IMR-90 (cell line): ENCODE measurements at regions of chrX and their contacts with region 1.

Region 1: GRCh38 chrX:139063364-139063763 is 351.8 kb upstream of the FGF13 start:
- DNase-seq: no peak
- ATAC-seq: no peak
- H3K4me3 ChIP-seq: no peak overlapping the region
- H3K27ac ChIP-seq: no peak overlapping the region
- H3K4me1 ChIP-seq: no peaks in the 10 kb centered on the region
- H3K27me3 ChIP-seq: no peaks in the 10 kb centered on the region
- CTCF ChIP-seq: no peak
- POLR2A ChIP-seq: no peak
- RAD21 ChIP-seq: no peak

Region 2: DNA sequence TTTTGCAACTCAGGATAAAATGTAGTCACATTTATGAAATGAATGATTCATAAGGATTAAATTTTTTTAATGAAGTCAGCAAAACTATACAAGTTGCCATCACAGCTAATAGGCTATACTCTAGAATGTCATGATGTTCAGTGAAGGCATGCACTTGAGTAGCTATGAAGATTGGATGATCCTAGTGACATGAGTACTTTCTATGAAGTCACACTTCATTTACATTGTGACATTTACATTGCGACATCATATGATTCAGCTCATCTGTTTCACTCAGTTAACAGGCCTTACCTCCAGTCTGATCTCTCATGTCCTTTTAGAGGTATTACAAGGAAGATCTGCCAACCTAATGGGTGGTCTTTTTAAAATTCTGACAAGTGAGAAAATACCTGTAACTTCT is 269.1 kb before region 1 on chrX:
- CTCF ChIA-PET with region 1: no interaction called
- POLR2A ChIA-PET with region 1: no interaction called
- dilution Hi-C with region 1: no loop called
- in situ Hi-C with region 1: no loop called
- intact Hi-C with region 1: no loop called
- DNase-seq: no peak
- ATAC-seq: no peak
- H3K4me3 ChIP-seq: no peak overlapping the region
- H3K27ac ChIP-seq: no peak overlapping the region
- H3K4me1 ChIP-seq: no peaks in the 10 kb centered on the region
- H3K27me3 ChIP-seq: no peaks in the 10 kb centered on the region
- CTCF ChIP-seq: no peak
- POLR2A ChIP-seq: no peak
- RAD21 ChIP-seq: no peak

Region 3: DNA sequence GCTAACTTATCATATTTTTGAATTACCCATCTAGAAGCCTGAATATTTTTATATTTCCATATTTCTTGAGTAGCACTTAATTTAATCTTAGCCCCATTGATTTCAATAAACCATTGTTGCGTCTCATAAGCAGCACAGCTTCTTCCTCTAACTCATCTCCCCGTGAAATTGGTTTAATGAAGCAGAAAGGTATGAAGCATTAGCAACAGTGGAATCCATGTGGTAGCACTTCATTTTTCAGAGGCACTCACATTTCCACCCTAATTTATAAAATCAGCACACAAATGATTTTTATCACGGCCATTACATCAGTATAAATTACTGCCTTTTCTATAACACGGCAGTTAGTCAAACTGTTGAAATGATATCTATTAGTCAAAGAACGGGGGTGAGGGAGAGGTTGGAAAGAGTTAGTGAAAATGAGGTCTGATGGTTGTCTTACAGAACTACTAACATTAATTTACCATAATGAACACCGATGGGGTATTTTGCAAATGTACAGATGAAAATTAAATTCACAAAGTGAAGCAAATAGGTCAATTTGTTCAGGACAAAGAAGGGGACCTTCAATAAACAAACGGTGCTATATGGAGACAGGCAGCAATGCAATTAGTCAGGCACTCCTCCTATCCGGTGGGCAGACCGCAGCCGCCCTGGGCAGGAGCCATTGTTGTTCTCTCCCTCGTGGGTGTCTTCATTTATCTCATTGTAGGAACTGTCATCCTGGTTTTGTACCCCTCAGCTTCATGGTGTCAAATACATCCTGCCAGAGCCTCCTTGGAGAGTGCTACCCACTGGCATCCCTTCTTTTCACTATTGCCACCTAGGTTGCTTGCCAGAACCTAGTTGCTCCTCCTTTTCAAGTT is 1235.8 kb after region 1 on chrX:
- CTCF ChIA-PET with region 1: no interaction called
- POLR2A ChIA-PET with region 1: no interaction called
- dilution Hi-C with region 1: no loop called
- in situ Hi-C with region 1: no loop called
- intact Hi-C with region 1: loop called (anchors 5 kb)
- DNase-seq: no peak
- ATAC-seq: no peak
- H3K4me3 ChIP-seq: no peak overlapping the region
- H3K27ac ChIP-seq: no peak overlapping the region
- H3K4me1 ChIP-seq: no peaks in the 10 kb centered on the region
- H3K27me3 ChIP-seq: no peaks in the 10 kb centered on the region
- CTCF ChIP-seq: no peak
- POLR2A ChIP-seq: no peak
- RAD21 ChIP-seq: no peak